ENCODE measurements at regions of chr19 and their contacts with region 1.

Region 1: DNA sequence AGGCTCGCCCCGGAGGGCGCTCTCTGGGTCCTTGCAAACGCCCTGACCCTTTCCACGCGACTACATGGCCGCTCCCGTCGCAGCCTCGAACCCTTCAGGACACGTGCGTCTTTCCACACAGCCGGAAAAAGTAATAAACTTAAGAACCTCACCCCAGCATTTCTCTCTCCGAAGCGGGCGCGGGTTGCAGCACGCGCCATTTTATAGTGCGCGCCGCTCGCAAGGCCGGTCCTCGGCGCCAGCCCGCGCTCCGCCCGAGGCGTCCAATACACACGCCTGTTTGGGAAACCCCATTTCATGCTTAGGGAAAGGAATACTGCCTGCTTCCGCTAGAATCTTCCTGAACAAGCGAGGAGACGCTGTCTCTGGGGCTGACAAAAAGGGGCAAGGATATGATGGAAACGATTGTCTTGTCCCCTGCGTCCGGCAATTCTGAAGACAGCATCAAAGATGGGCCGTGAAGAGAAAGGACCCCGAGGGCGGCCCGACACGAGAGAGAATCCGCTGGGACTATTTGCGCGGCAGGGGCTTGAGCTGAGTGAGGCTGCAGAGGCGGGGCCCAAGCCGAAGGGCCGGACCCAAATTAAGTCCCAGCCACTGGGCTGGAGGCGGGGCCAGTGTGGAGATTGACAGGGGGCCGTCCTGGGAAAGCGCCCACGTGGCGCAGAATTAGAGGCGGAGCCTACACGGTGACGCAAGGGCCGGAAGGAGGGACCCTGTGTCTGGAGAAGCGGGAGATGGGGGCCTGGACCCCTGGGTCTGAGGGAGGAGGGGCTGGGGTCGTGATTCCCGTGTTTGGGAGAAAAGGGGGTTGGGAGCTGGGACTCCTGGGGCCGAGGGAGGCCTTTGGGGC is 14.4 kb downstream of the ACP4 start:
- DNase-seq: peak; percentile 99
- ATAC-seq: peak; percentile 99
- H3K4me3 Mint-ChIP-seq: peak overlapping the region; percentile 96
- H3K27ac Mint-ChIP-seq: peak overlapping the region; percentile 98
- H3K4me1 Mint-ChIP-seq: peaks cover 35% of the 10 kb centered on the region
- H3K27me3 Mint-ChIP-seq: no peaks in the 10 kb centered on the region

Region 2: DNA sequence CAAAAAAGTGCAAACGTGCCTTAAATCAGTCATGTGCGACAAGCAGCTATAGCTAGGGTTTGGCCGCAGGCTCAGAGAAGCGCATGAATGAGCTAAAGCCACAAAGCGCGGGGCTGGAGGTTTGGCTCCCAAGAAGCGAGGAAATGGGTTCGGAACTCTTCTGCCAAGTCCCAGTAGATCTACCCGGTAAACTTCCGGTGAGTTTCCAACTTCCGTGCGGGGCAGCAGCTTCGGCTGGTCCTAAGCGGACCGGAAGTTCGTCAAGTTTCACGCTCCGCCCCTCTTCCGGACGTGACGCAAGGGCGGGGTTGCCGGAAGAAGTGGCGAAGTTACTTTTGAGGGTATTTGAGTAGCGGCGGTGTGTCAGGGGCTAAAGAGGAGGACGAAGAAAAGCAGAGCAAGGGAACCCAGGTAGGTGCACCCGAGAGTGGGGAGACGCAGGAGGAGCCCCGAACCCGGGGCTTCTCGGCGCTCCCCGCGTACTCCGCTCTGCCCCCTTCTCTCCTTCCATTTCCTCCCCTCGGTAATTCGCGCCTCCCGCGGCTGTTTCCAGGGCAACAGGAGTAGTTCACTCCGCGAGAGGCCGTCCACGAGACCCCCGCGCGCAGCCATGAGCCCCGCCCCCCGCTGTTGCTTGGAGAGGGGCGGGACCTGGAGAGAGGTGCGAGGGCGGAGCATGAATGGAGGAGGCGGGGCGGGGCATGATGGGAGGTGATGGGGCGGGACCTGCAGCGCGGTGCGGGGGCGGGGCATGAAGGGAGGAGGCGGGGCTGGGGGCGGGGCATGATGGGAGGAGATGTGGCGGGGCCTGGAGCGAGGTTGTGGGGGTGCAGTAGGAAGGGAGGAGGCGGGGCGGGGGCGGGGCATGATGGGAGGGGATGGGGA is 428.2 kb before region 1 on chr19 and contains the start of gene NR1H2:
- CTCF ChIA-PET with region 1: no interaction called
- POLR2A ChIA-PET with region 1: no interaction called
- intact Hi-C with region 1: loop called in 1 of 2 experiments (anchors 2 kb)
- DNase-seq: peak; percentile 97
- ATAC-seq: peak; percentile 89
- H3K4me3 Mint-ChIP-seq: peak within 1 kb of the TSS; percentile 89
- H3K27ac Mint-ChIP-seq: peak within 1 kb of the TSS; percentile 97
- H3K4me1 Mint-ChIP-seq: peaks cover 21% of the 10 kb centered on the region
- H3K27me3 Mint-ChIP-seq: no peaks in the 10 kb centered on the region
- total RNA-seq, gene NR1H2: 50.3 to 53.6 TPM

Region 3: DNA sequence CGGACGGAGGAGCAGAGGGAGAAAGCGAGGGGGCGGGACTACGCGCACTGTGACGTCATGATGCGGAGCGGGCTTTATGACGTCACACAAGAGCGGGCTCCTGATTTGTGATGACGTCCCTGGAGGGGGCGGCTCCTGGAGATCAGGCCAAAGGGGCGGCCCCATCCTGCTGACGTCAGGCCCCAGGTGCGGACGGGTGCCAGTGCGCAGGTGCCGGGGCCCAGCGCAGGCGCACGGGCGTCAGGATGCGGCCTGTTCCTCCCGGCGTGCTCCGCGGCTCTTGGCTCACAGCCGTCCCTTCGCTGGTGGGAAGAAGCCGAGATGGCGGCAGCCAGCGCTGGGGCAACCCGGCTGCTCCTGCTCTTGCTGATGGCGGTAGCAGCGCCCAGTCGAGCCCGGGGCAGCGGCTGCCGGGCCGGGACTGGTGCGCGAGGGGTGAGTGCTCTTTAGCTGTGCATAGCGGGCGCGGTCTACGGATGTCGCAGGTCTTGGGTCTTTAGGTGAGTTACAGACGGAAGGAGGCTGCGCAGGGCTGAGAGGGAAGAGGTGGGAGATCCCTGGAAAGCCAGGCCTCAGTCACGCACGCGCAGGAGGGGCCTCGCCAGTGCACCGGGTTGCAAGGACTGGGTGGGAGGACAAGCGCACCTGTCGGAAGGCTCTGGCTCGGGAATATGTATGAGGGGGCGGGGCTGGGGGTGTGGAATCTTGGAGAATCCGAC is 328.3 kb before region 1 on chr19 and contains the starts of genes EMC10 and GARIN5A:
- CTCF ChIA-PET with region 1: no interaction called
- POLR2A ChIA-PET with region 1: no interaction called
- intact Hi-C with region 1: loop called in 1 of 2 experiments (anchors 1 kb)
- DNase-seq: peak; percentile 98
- ATAC-seq: peak; percentile 98
- H3K4me3 Mint-ChIP-seq: peak within 1 kb of the TSS; percentile 90
- H3K27ac Mint-ChIP-seq: peak within 1 kb of the TSS; percentile 84
- H3K4me1 Mint-ChIP-seq: peaks cover 18% of the 10 kb centered on the region
- H3K27me3 Mint-ChIP-seq: no peaks in the 10 kb centered on the region
- total RNA-seq, gene EMC10: 33.4 to 34.7 TPM
- total RNA-seq, gene GARIN5A: 0.48 to 0.58 TPM

Region 4: DNA sequence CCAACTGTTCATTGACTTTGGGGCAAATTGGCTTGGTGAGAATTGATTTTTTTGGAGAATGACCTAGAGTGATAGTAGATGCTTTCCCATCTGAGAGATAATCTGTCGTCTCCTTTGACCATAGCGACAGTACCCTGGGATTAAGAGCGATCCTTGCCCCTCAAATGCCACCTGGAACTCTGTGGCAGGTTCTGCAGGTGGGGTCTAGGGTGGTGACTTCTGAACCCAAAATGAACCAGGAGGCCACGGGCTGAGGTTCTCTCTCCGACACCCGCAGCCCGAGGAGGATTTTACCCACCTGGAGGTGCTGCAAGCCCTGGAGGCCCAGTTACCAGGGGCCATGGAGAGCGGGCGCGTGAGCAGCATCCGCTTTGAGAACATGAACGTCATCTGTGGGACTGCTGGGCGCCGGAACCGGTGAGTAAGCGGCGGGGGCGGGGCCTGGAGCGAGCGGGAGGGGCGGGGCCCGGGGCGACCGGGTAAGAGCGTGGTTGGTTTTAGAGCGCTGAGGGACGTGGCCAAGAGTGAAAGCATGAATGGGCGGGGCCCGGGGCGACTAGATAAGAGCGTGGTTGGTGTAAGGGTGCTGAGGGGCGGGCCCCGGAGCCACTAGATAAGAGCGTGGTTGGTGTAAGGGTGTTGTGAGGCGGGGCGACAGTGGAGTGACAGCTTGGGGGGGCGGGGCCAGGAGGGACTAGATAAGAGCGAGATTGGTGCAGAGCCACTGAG is 146.8 kb before region 1 on chr19:
- CTCF ChIA-PET with region 1: no interaction called
- POLR2A ChIA-PET with region 1: no interaction called
- intact Hi-C with region 1: loop called in 1 of 2 experiments (anchors 1 kb)
- DNase-seq: peak; percentile 98
- ATAC-seq: peak; percentile 96
- H3K4me3 Mint-ChIP-seq: peak overlapping the region; percentile 76
- H3K27ac Mint-ChIP-seq: peak overlapping the region; percentile 93
- H3K4me1 Mint-ChIP-seq: peaks cover 20% of the 10 kb centered on the region
- H3K27me3 Mint-ChIP-seq: peaks cover 65% of the 10 kb centered on the region

Region 5: DNA sequence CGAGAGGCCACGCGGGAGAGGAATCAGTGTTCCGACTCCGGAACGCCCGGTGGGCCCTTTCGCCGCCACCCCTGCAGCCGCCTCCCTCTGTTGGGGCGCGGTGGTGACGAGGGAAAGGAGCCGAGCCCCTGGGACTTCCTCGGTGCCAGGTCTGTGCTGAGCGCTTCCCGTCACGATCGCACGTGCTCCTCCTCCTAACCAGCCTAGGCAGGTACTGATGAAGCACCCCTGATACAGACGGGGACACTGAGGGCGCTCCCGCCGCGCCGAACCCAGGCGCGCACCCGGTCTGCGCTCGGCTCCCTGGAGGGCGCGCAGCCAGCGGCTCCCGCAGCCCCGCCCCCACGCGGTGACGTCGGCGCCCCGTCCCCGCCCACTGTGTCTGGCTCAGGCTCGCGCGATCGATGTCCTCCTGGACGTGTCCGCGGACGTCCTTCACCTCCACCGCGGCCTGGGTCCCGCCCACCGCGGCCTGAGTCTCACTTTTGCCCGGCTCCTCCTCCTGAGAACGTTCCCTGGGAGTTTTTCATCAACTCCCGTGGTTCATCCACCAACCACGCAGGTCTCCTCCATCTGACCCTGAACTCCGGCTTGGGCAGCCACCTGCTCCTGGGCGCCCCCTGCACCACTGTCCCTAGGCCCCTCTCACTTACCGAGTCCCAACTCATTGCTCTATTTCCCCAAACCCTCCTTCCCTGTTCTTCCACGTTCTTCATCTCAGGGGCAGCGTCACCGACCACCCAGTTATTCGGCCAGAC is 31.3 kb after region 1 on chr19:
- CTCF ChIA-PET with region 1: no interaction called
- POLR2A ChIA-PET with region 1: no interaction called
- intact Hi-C with region 1: loop called in 1 of 2 experiments (anchors 1 kb)
- DNase-seq: peak; percentile 88
- ATAC-seq: peak; percentile 95
- H3K4me3 Mint-ChIP-seq: peak overlapping the region; percentile 68
- H3K27ac Mint-ChIP-seq: peak overlapping the region; percentile 37
- H3K4me1 Mint-ChIP-seq: peaks cover 7% of the 10 kb centered on the region
- H3K27me3 Mint-ChIP-seq: peaks cover 46% of the 10 kb centered on the region

Region 6: DNA sequence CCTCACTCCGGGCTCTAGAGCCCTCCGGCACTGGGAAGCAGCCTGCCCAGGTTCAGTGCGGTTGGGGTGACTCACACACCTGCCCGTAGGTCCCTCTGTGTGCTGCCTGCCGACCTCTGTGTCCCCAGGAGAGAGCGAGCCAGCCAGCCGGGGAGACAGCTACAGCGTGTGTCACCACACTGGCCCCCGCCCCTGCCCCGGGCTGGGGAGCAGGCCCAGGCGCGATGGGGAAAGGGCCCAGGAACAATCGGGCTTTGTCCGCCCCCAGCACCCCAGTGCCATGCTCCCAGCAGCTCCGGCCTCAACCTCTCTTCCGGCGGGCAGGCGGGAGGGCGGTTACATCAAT is 164.7 kb after region 1 on chr19 and contains the start of gene KLK6:
- CTCF ChIA-PET with region 1: no interaction called
- POLR2A ChIA-PET with region 1: no interaction called
- intact Hi-C with region 1: no loop called
- DNase-seq: no peak
- ATAC-seq: no peak
- H3K4me3 Mint-ChIP-seq: no peak within 1 kb of the TSS
- H3K27ac Mint-ChIP-seq: no peak within 1 kb of the TSS
- H3K4me1 Mint-ChIP-seq: no peaks in the 10 kb centered on the region
- H3K27me3 Mint-ChIP-seq: peaks cover 37% of the 10 kb centered on the region
- total RNA-seq, gene KLK6: not detected

Region 7: GRCh38 chr19:51367565-51368365 is 563.1 kb after region 1 on chr19:
- CTCF ChIA-PET with region 1: no interaction called
- POLR2A ChIA-PET with region 1: no interaction called
- intact Hi-C with region 1: loop called in 1 of 2 experiments (anchors 2 kb)
- DNase-seq: peak; percentile 99
- ATAC-seq: peak; percentile 83
- H3K4me3 Mint-ChIP-seq: peak overlapping the region; percentile 90
- H3K27ac Mint-ChIP-seq: peak overlapping the region; percentile 97
- H3K4me1 Mint-ChIP-seq: peaks cover 58% of the 10 kb centered on the region
- H3K27me3 Mint-ChIP-seq: no peaks in the 10 kb centered on the region

Measured in activated CD4-positive, alpha-beta T cell treated with anti-CD3 and anti-CD28 coated beads for 36 hours (primary cell).